Posterior vena cava (tissue), 2 donors: ENCODE measurements at regions of chr11 and their contacts with region 1.

Region 1: GRCh38 chr11:57480409-57481137 is 20.2 kb downstream of the RTN4RL2 start:
- DNase-seq: peak; percentile 91

Region 2: DNA sequence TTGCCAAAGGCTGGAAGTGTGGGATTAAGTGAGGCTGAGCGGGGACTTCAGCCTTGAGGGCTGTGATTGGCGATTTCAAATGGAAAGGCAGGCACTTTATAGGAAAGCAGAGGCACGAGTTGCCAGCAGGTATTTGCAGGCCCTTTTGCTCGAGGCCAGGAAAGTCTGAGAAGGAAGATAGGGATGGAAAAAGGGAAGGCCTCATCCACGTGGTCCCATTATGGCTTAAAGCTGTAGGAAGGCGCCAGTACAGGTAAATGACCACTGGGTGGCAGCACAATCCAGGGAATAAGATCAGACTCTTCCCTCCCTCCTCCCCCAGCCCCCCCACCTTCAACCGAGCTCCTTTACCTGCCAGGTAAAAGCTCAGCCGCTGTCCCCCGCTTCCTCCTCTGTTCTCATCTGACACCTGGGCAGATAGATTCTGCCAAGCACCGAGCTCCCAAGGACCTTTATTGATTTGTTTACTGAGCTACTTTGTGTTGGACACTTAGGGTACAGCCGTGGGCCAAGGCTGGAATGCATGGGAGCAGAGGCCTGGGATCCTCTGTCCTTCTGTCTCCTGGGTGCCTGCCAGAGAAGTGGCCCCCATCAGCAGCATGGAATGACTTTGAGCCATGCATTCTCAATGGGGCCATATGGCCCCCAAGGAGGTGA is 134.9 kb before region 1 on chr11:
- intact Hi-C with region 1: loop called in 1 of 2 experiments (anchors 5 kb)
- DNase-seq: peak; percentile 80

Region 3: GRCh38 chr11:57546869-57547475 is 66.4 kb after region 1 on chr11:
- intact Hi-C with region 1: no loop called
- DNase-seq: no peak